ENCODE measurements at regions of chr6 and their contacts with region 1.

Region 1: GRCh38 chr6:71383901-71384489 is 95.4 kb downstream of the OGFRL1 start:
- DNase-seq: no peak
- ATAC-seq: no peak
- H3K4me3 ChIP-seq: no peak overlapping the region
- H3K27ac ChIP-seq: peak overlapping the region; percentile 48
- H3K4me1 ChIP-seq: peaks cover 54% of the 10 kb centered on the region
- H3K27me3 ChIP-seq: no peaks in the 10 kb centered on the region
- CTCF ChIP-seq: peak; percentile 76; the same call in 1 of the 2 replicates

Region 2: DNA sequence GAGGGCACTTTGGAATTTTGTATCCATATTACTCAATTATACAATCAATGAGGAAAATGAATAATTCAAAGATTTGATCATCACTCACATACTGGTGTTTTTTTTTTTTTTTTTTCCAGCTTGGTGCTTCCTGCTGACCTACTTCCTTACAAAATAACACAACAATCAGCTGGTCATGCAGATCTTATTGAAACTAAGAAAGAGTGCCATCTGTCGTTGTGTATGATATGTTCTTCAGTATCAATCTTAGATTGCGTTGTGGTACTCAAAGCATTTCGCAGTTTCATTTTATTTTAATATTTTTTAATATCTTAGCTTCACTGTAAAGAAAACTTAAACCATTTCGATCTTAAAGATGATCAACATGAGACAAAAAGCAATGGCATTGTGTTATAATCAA is 60.2 kb after region 1 on chr6:
- CTCF ChIA-PET with region 1: no interaction called
- POLR2A ChIA-PET with region 1: interaction called, 3 read pairs
- in situ Hi-C with region 1: no loop called
- intact Hi-C with region 1: loop called (anchors 2 kb)
- DNase-seq: no peak
- ATAC-seq: peak; percentile 79; the same call in 1 of the 2 replicates
- H3K4me3 ChIP-seq: no peak overlapping the region
- H3K27ac ChIP-seq: peak overlapping the region; percentile 18; the same call in 1 of the 2 replicates
- H3K4me1 ChIP-seq: no peaks in the 10 kb centered on the region
- H3K27me3 ChIP-seq: no peaks in the 10 kb centered on the region
- CTCF ChIP-seq: peak; percentile 48; the same call in 1 of the 2 replicates

Region 3: DNA sequence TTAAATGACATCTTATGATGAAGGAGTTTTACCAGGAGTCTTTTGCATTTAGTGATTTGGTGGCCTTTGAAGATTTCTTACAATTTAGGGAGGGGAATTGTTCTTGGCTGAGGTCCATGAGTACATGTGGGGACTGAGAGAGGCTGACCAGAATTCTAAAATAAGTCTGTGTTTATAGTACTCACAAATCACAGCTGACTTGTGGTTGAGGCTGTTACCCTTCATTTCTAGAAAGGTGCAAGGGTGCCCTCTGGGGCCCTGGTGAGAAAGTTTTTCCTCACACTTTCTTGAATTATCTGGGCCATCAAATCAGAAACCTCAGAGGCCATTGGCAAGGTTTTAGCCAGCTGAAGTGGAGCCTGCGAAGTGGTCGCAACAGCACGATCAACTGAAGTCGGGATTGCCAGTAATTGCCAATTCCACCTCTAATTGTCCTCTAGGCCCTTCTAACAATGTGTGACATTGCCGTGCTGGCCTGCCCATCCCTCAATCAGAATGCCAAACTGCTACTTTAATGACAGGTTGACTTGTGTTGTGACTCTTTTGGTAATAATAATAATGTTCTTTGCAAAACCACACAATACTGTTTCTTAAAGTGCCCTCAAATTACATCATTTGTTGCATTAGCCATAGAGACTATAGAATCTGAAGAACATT is 126.2 kb after region 1 on chr6:
- CTCF ChIA-PET with region 1: interaction called, 4 read pairs
- POLR2A ChIA-PET with region 1: no interaction called
- in situ Hi-C with region 1: no loop called
- intact Hi-C with region 1: loop called (anchors 1 kb)
- DNase-seq: no peak
- ATAC-seq: peak; percentile 93
- H3K4me3 ChIP-seq: no peak overlapping the region
- H3K27ac ChIP-seq: no peak overlapping the region; the same call in 1 of the 2 replicates
- H3K4me1 ChIP-seq: no peaks in the 10 kb centered on the region
- H3K27me3 ChIP-seq: no peaks in the 10 kb centered on the region; the same call in 1 of the 2 replicates
- CTCF ChIP-seq: peak; percentile 81